ENCODE measurements at regions of chr3 and their contacts with region 1.

Region 1: GRCh38 chr3:4633078-4634004 is 140.2 kb downstream of the ITPR1 start:
- DNase-seq: no peak
- H3K4me3 ChIP-seq: no peak overlapping the region
- CTCF ChIP-seq: peak in 1 of 3 donors; percentile 28
- POLR2A ChIP-seq: no peak

Region 2: GRCh38 chr3:4350789-4351163 is 282.6 kb before region 1 on chr3:
- intact Hi-C with region 1: loop called (anchors 5 kb)
- DNase-seq: peak in 1 of 2 donors; percentile 35
- H3K4me3 ChIP-seq: no peak overlapping the region
- CTCF ChIP-seq: peak in 1 of 3 donors; percentile 42
- POLR2A ChIP-seq: no peak

Region 3: GRCh38 chr3:4776980-4777581 is 143.7 kb after region 1 on chr3:
- intact Hi-C with region 1: no loop called
- DNase-seq: peak in 1 of 2 donors; percentile 49
- H3K4me3 ChIP-seq: no peak overlapping the region
- CTCF ChIP-seq: no peak
- POLR2A ChIP-seq: no peak